ENCODE measurements at regions of chr18 and their contacts with region 1.

Region 1: GRCh38 chr18:10953672-10954071 is 195.7 kb downstream of the PIEZO2 start:
- DNase-seq: peak; percentile 84
- ATAC-seq: peak; percentile 65
- H3K4me3 ChIP-seq: peak overlapping the region; percentile 30; the same call in 1 of the 2 replicates
- H3K27ac ChIP-seq: peak overlapping the region; percentile 100
- H3K4me1 ChIP-seq: peaks cover 41% of the 10 kb centered on the region
- H3K27me3 ChIP-seq: no peaks in the 10 kb centered on the region
- CTCF ChIP-seq: no peak; a peak in 1 of 6 replicates
- EP300 ChIP-seq: peak; percentile 55 to 69; a peak in 3 of 4 replicates
- POLR2A ChIP-seq: peak; percentile 80
- RAD21 ChIP-seq: peak; percentile 21; the same call in 1 of the 2 replicates

Region 2: DNA sequence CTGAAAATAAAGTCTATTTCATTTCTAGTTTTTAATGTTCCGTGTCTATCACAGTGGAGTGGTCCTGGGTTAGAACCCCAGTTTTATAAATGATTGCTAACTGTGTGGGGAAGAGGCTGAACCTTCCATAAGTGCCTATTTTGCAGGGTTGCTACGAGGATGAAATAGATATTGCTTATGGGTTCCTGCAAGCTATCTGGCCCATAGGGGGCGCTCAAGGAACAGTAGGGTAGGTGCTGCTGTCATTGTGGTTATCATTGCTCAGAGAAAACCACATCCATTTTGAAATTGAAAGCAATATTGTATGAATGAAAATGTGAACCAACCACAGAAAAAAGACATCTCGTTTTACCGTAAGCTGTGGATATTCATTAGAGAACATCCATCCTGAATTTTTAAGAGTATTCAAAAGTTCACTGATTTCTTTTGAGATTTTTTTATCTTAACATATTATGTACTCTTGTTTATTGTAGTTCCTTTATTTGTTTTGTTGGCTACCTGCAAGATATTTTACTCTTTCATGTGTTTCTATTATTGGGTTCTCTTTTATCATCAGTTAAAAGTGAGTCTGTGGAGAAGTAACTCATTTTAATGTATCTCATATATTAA is 166.3 kb before region 1 on chr18:
- CTCF ChIA-PET with region 1: interaction called, 4 read pairs
- POLR2A ChIA-PET with region 1: interaction called, 6 read pairs
- RAD21 ChIA-PET with region 1: interaction called, 4 read pairs
- SMC1A ChIA-PET with region 1: no interaction called
- in situ Hi-C with region 1: no loop called
- intact Hi-C with region 1: loop called (anchors 10 kb)
- DNase-seq: peak; percentile 77
- ATAC-seq: peak; percentile 96
- H3K4me3 ChIP-seq: no peak overlapping the region
- H3K27ac ChIP-seq: no peak overlapping the region
- H3K4me1 ChIP-seq: no peaks in the 10 kb centered on the region; the same call in 1 of the 2 replicates
- H3K27me3 ChIP-seq: no peaks in the 10 kb centered on the region
- CTCF ChIP-seq: peak; percentile 79 to 97 (median 82)
- EP300 ChIP-seq: peak; percentile 48 to 55; a peak in 2 of 4 replicates
- POLR2A ChIP-seq: no peak
- RAD21 ChIP-seq: peak; percentile 88

Region 3: GRCh38 chr18:10928772-10929373 is 24.8 kb before region 1 on chr18:
- CTCF ChIA-PET with region 1: interaction called, 4 read pairs
- POLR2A ChIA-PET with region 1: interaction called, 11 read pairs
- RAD21 ChIA-PET with region 1: interaction called, 38 read pairs
- SMC1A ChIA-PET with region 1: interaction called, 70 read pairs
- in situ Hi-C with region 1: no loop called
- intact Hi-C with region 1: loop called (anchors 1 kb)
- DNase-seq: peak; percentile 87
- ATAC-seq: peak; percentile 76
- H3K4me3 ChIP-seq: peak overlapping the region; percentile 48; the same call in 1 of the 2 replicates
- H3K27ac ChIP-seq: peak overlapping the region; percentile 96
- H3K4me1 ChIP-seq: peaks cover 37% of the 10 kb centered on the region
- H3K27me3 ChIP-seq: no peaks in the 10 kb centered on the region
- CTCF ChIP-seq: no peak
- EP300 ChIP-seq: peak; percentile 96 to 97
- POLR2A ChIP-seq: no peak
- RAD21 ChIP-seq: peak; percentile 24; the same call in 1 of the 2 replicates

Region 4: GRCh38 chr18:10965119-10965518 is 11.4 kb after region 1 on chr18:
- CTCF ChIA-PET with region 1: interaction called, 6 read pairs
- POLR2A ChIA-PET with region 1: no interaction called
- RAD21 ChIA-PET with region 1: interaction called, 5 read pairs
- SMC1A ChIA-PET with region 1: interaction called, 45 read pairs
- in situ Hi-C with region 1: no loop called
- intact Hi-C with region 1: no loop called
- DNase-seq: no peak
- ATAC-seq: no peak
- H3K4me3 ChIP-seq: no peak overlapping the region
- H3K27ac ChIP-seq: no peak overlapping the region
- H3K4me1 ChIP-seq: no peaks in the 10 kb centered on the region
- H3K27me3 ChIP-seq: no peaks in the 10 kb centered on the region
- CTCF ChIP-seq: no peak
- EP300 ChIP-seq: no peak
- POLR2A ChIP-seq: no peak
- RAD21 ChIP-seq: no peak

Region 5: GRCh38 chr18:11005528-11005927 is 51.9 kb after region 1 on chr18:
- CTCF ChIA-PET with region 1: interaction called, 6 read pairs
- POLR2A ChIA-PET with region 1: interaction called, 18 read pairs
- RAD21 ChIA-PET with region 1: interaction called, 22 read pairs
- SMC1A ChIA-PET with region 1: interaction called, 20 read pairs
- in situ Hi-C with region 1: no loop called
- intact Hi-C with region 1: loop called (anchors 1 kb)
- DNase-seq: peak; percentile 58
- ATAC-seq: peak; percentile 76
- H3K4me3 ChIP-seq: no peak overlapping the region
- H3K27ac ChIP-seq: peak overlapping the region; percentile 82
- H3K4me1 ChIP-seq: peaks cover 31% of the 10 kb centered on the region
- H3K27me3 ChIP-seq: no peaks in the 10 kb centered on the region
- CTCF ChIP-seq: no peak
- EP300 ChIP-seq: peak in 1 of 2 experiments; percentile 76; a peak in 2 of 4 replicates
- POLR2A ChIP-seq: no peak
- RAD21 ChIP-seq: no peak

Region 6: GRCh38 chr18:11027862-11028261 is 74.2 kb after region 1 on chr18:
- CTCF ChIA-PET with region 1: interaction called, 4 read pairs
- POLR2A ChIA-PET with region 1: interaction called, 4 read pairs
- RAD21 ChIA-PET with region 1: interaction called, 17 read pairs
- SMC1A ChIA-PET with region 1: interaction called, 22 read pairs
- in situ Hi-C with region 1: no loop called
- intact Hi-C with region 1: loop called (anchors 5 kb)
- DNase-seq: peak; percentile 68
- ATAC-seq: peak; percentile 99
- H3K4me3 ChIP-seq: no peak overlapping the region
- H3K27ac ChIP-seq: peak overlapping the region; percentile 73
- H3K4me1 ChIP-seq: peaks cover 25% of the 10 kb centered on the region
- H3K27me3 ChIP-seq: no peaks in the 10 kb centered on the region
- CTCF ChIP-seq: no peak
- EP300 ChIP-seq: peak in 1 of 2 experiments; percentile 45; a peak in 1 of 4 replicates
- POLR2A ChIP-seq: peak; percentile 49
- RAD21 ChIP-seq: no peak

Measured in GM12878 (cell line).